Activated CD4-positive, alpha-beta T cell treated with anti-CD3 and anti-CD28 coated beads for 36 hours (primary cell): ENCODE measurements at regions of chr21 and their contacts with region 1.

Region 1: DNA sequence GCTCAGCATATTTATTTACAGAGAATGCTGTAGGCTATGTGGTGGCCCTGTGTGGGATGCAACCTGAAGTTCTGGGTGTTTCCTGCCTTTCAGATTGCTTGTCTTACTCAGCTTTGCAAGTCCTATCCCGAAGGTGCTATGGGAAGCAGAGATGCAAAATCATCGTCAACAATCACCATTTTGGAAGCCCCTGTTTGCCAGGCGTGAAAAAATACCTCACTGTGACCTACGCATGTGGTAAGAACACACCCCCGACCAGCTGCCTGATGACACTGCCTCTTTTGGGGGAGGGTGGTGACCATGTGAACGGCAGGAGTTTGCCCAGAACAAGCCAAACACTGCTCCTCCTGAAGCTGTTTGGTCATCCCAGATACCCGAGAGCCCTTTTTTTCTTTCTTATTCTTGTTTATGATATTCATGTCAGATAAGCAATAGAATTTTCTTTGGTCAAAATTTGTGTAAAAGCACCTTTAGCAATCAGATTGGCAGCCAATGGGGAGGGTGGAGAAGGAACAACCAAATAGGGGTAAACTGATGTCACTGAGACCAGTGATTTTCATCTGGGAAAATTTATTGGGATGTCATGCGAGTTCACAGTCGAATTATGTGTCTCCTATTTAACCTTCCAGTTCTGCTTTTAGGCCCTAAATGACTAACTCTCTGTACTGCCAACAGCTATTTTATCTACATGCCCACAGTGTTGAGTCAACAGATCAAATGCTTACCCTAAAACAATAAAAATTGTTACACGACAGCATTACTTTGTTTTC is 82.6 kb downstream of the EVA1C start:
- DNase-seq: no peak
- ATAC-seq: no peak
- H3K4me3 Mint-ChIP-seq: no peak overlapping the region
- H3K27ac Mint-ChIP-seq: no peak overlapping the region
- H3K4me1 Mint-ChIP-seq: peaks cover 30% of the 10 kb centered on the region
- H3K27me3 Mint-ChIP-seq: no peaks in the 10 kb centered on the region

Region 2: GRCh38 chr21:31659536-31660258 is 835.4 kb before region 1 on chr21 and contains the start of gene SOD1:
- CTCF ChIA-PET with region 1: no interaction called
- POLR2A ChIA-PET with region 1: no interaction called
- intact Hi-C with region 1: loop called in 1 of 2 experiments (anchors 10 kb)
- DNase-seq: peak; percentile 97
- ATAC-seq: peak; percentile 93
- H3K4me3 Mint-ChIP-seq: peak within 1 kb of the TSS; percentile 88
- H3K27ac Mint-ChIP-seq: peak within 1 kb of the TSS; percentile 99
- H3K4me1 Mint-ChIP-seq: peaks cover 68% of the 10 kb centered on the region
- H3K27me3 Mint-ChIP-seq: no peaks in the 10 kb centered on the region
- total RNA-seq, gene SOD1: 232 to 284 TPM

Region 3: GRCh38 chr21:32253215-32253641 is 241.9 kb before region 1 on chr21:
- CTCF ChIA-PET with region 1: no interaction called
- POLR2A ChIA-PET with region 1: no interaction called
- intact Hi-C with region 1: no loop called
- DNase-seq: no peak
- ATAC-seq: no peak
- H3K4me3 Mint-ChIP-seq: no peak overlapping the region
- H3K27ac Mint-ChIP-seq: no peak overlapping the region
- H3K4me1 Mint-ChIP-seq: no peaks in the 10 kb centered on the region
- H3K27me3 Mint-ChIP-seq: peaks cover 20% of the 10 kb centered on the region

Region 4: DNA sequence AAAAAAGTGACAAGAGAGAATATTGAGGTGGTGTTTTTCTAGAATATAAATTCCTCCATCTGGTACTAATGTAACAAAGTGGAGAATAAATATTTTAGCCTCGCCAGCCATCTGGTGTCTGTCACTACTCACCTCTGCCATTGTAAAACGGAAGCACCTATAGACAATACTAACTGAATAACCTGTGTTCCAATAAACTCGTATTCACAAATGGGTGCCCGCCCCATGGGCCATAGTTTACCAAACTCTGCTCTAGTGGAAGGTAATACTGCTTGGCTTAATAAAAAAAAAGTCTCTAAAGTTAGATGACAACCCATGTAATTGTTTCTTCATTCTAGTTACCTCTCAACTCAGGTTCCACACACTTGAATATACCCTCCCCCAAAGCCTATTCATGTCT is 224.4 kb before region 1 on chr21:
- CTCF ChIA-PET with region 1: no interaction called
- POLR2A ChIA-PET with region 1: no interaction called
- intact Hi-C with region 1: no loop called
- DNase-seq: no peak
- ATAC-seq: no peak
- H3K4me3 Mint-ChIP-seq: no peak overlapping the region
- H3K27ac Mint-ChIP-seq: no peak overlapping the region
- H3K4me1 Mint-ChIP-seq: no peaks in the 10 kb centered on the region
- H3K27me3 Mint-ChIP-seq: no peaks in the 10 kb centered on the region

Region 5: GRCh38 chr21:32412162-32413014 is 82.7 kb before region 1 on chr21 and contains the start of gene EVA1C:
- CTCF ChIA-PET with region 1: no interaction called
- POLR2A ChIA-PET with region 1: no interaction called
- intact Hi-C with region 1: loop called (anchors 1 to 2 kb)
- DNase-seq: peak; percentile 80
- ATAC-seq: peak; percentile 68
- H3K4me3 Mint-ChIP-seq: peak within 1 kb of the TSS; percentile 94
- H3K27ac Mint-ChIP-seq: peak within 1 kb of the TSS; percentile 97
- H3K4me1 Mint-ChIP-seq: peaks cover 28% of the 10 kb centered on the region
- H3K27me3 Mint-ChIP-seq: no peaks in the 10 kb centered on the region
- total RNA-seq, gene EVA1C: 9.3 to 10.4 TPM

Region 6: GRCh38 chr21:32569261-32570230 is 74.4 kb after region 1 on chr21:
- CTCF ChIA-PET with region 1: no interaction called
- POLR2A ChIA-PET with region 1: no interaction called
- intact Hi-C with region 1: loop called (anchors 2 to 5 kb)
- DNase-seq: peak; percentile 91
- ATAC-seq: peak; percentile 96
- H3K4me3 Mint-ChIP-seq: peak overlapping the region; percentile 78
- H3K27ac Mint-ChIP-seq: peak overlapping the region; percentile 81
- H3K4me1 Mint-ChIP-seq: peaks cover 13% of the 10 kb centered on the region
- H3K27me3 Mint-ChIP-seq: no peaks in the 10 kb centered on the region

Region 7: GRCh38 chr21:32727687-32728455 is 232.8 kb after region 1 on chr21 and contains the start of gene SYNJ1:
- CTCF ChIA-PET with region 1: no interaction called
- POLR2A ChIA-PET with region 1: no interaction called
- intact Hi-C with region 1: loop called in 1 of 2 experiments (anchors 5 kb)
- DNase-seq: peak; percentile 97
- ATAC-seq: peak; percentile 91
- H3K4me3 Mint-ChIP-seq: peak within 1 kb of the TSS; percentile 93
- H3K27ac Mint-ChIP-seq: peak within 1 kb of the TSS; percentile 91
- H3K4me1 Mint-ChIP-seq: peaks cover 54% of the 10 kb centered on the region
- H3K27me3 Mint-ChIP-seq: no peaks in the 10 kb centered on the region
- total RNA-seq, gene SYNJ1: 6.3 to 10.5 TPM

Region 8: GRCh38 chr21:32834916-32835235 is 339.8 kb after region 1 on chr21:
- CTCF ChIA-PET with region 1: no interaction called
- POLR2A ChIA-PET with region 1: no interaction called
- intact Hi-C with region 1: no loop called
- DNase-seq: no peak
- ATAC-seq: no peak
- H3K4me3 Mint-ChIP-seq: no peak overlapping the region
- H3K27ac Mint-ChIP-seq: no peak overlapping the region
- H3K4me1 Mint-ChIP-seq: peaks cover 2% of the 10 kb centered on the region
- H3K27me3 Mint-ChIP-seq: no peaks in the 10 kb centered on the region